Activated CD8-positive, alpha-beta T cell treated with anti-CD3 and anti-CD28 coated beads, Interleukin-2, amount 10 ng/mL, durations not matched to agents 7 days and 5 days (primary cell): ENCODE measurements at regions of chr2 and their contacts with region 1.

Region 1: DNA sequence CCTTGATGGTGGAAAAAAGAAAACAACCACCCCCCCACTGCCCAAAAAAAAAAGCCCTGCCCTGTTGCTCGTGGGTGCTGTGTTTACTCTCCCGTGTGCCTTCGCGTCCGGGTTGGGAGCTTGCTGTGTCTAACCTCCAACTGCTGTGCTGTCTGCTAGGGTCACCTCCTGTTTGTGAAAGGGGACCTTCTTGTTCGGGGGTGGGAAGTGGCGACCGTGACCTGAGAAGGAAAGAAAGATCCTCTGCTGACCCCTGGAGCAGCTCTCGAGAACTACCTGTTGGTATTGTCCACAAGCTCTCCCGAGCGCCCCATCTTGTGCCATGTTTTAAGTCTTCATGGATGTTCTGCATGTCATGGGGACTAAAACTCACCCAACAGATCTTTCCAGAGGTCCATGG is 28.0 kb downstream of the MAL start:
- DNase-seq: no peak
- ATAC-seq: no peak
- H3K4me3 Mint-ChIP-seq: no peak overlapping the region
- H3K27ac Mint-ChIP-seq: peak overlapping the region; percentile 61
- H3K4me1 Mint-ChIP-seq: peaks cover 78% of the 10 kb centered on the region
- H3K27me3 Mint-ChIP-seq: no peaks in the 10 kb centered on the region

Region 2: DNA sequence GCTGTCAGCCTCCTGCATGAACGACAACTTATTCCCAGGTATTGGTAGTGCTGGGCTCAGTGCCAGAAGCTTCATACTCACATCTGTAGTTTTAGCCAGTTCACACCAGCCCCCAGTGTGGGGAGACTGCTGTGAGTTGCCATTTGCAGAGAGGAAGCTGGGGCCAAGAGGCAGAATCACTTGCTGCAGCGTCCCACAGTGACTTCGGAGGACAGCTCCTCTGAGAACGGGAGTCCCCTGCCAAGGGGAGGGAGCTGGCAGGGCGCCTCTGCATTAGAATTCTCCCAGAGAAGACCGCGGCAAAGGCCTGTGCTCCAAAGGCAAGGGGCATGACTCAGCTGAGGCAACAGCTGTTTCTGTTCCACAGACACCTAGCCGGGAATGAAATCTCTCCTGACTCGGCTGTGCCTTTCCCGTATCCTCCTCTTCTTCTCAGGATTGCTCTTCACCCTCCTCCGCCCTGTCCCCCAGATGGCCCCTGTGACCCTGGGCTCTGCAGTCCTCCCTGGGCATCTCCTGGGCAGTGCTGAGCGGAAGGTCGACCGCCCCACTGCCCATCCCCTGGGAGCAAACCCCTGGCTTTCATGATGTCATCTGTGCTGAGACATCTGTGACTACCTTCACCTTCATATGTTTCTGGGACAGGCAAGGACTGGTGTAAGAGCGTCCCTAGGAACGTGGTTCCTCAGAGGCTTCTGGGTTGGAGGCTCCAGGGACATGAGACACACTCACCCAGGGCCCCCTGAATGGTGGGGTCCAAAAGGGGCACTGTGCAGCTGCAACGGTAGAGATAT is 10.0 kb before region 1 on chr2:
- CTCF ChIA-PET with region 1: interaction called, 13 read pairs
- POLR2A ChIA-PET with region 1: no interaction called
- DNase-seq: no peak
- ATAC-seq: no peak
- H3K4me3 Mint-ChIP-seq: no peak overlapping the region
- H3K27ac Mint-ChIP-seq: peak overlapping the region; percentile 44
- H3K4me1 Mint-ChIP-seq: peaks cover 72% of the 10 kb centered on the region
- H3K27me3 Mint-ChIP-seq: no peaks in the 10 kb centered on the region

Region 3: DNA sequence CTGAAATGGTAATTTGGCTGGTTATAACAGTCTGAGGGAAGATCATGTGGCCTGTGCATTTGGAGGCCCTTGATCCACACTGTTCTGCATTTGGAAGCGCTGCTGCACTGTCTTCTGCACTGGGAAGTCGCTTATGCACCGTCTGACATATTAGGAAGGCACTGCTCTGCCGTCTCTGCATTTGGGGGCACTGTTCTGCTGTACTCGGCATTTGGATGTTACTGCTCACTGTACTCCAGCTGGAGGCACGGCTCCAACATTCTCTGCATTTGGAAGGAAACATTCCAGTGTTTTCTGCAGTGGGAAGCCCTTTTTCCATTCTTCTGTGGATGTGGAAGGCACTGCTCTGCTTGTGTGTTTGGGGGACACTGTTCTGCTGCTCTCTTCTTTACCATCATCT is 211.1 kb after region 1 on chr2:
- CTCF ChIA-PET with region 1: no interaction called
- POLR2A ChIA-PET with region 1: no interaction called
- DNase-seq: peak; percentile 3
- ATAC-seq: no peak
- H3K4me3 Mint-ChIP-seq: no peak overlapping the region
- H3K27ac Mint-ChIP-seq: no peak overlapping the region
- H3K4me1 Mint-ChIP-seq: no peaks in the 10 kb centered on the region
- H3K27me3 Mint-ChIP-seq: peaks cover 2% of the 10 kb centered on the region